Activated naive CD4-positive, alpha-beta T cell treated with anti-CD3 and anti-CD28 coated beads for 36 hours (primary cell): ENCODE measurements at regions of chr6 and their contacts with region 1.

Region 1: GRCh38 chr6:20212392-20213217 is at the start of gene MBOAT1:
- DNase-seq: peak; percentile 71
- H3K4me3 Mint-ChIP-seq: peak within 1 kb of the TSS; percentile 83
- H3K27ac Mint-ChIP-seq: peak within 1 kb of the TSS; percentile 85
- H3K4me1 Mint-ChIP-seq: peaks cover 30% of the 10 kb centered on the region
- H3K27me3 Mint-ChIP-seq: no peaks in the 10 kb centered on the region
- total RNA-seq, gene MBOAT1: 6.3 to 7.3 TPM

Region 2: GRCh38 chr6:20126789-20127653 is 85.6 kb before region 1 on chr6:
- CTCF ChIA-PET with region 1: no interaction called
- intact Hi-C with region 1: loop called (anchors 5 kb)
- DNase-seq: peak; percentile 73
- H3K4me3 Mint-ChIP-seq: no peak overlapping the region
- H3K27ac Mint-ChIP-seq: no peak overlapping the region
- H3K4me1 Mint-ChIP-seq: peaks cover 4% of the 10 kb centered on the region
- H3K27me3 Mint-ChIP-seq: no peaks in the 10 kb centered on the region

Region 3: GRCh38 chr6:20202324-20202658 is 10.3 kb before region 1 on chr6:
- CTCF ChIA-PET with region 1: no interaction called
- intact Hi-C with region 1: loop called (anchors 1 kb)
- DNase-seq: no peak
- H3K4me3 Mint-ChIP-seq: no peak overlapping the region
- H3K27ac Mint-ChIP-seq: no peak overlapping the region
- H3K4me1 Mint-ChIP-seq: peaks cover 36% of the 10 kb centered on the region
- H3K27me3 Mint-ChIP-seq: no peaks in the 10 kb centered on the region

Region 4: GRCh38 chr6:20534295-20535262 is 322.0 kb after region 1 on chr6 and contains the start of gene CDKAL1:
- CTCF ChIA-PET with region 1: interaction called, 3 read pairs
- intact Hi-C with region 1: loop called (anchors 1 kb)
- DNase-seq: peak; percentile 96
- H3K4me3 Mint-ChIP-seq: peak within 1 kb of the TSS; percentile 95
- H3K27ac Mint-ChIP-seq: peak within 1 kb of the TSS; percentile 94
- H3K4me1 Mint-ChIP-seq: peaks cover 33% of the 10 kb centered on the region
- H3K27me3 Mint-ChIP-seq: no peaks in the 10 kb centered on the region
- total RNA-seq, gene CDKAL1: 20.4 TPM